ENCODE measurements at regions of chr5 and their contacts with region 1.

Region 1: GRCh38 chr5:35852084-35852734 is 4.5 kb upstream of the IL7R start:
- DNase-seq: peak; percentile 45
- H3K4me3 Mint-ChIP-seq: peak overlapping the region; percentile 90
- H3K27ac Mint-ChIP-seq: peak overlapping the region; percentile 96
- H3K4me1 Mint-ChIP-seq: peaks cover 72% of the 10 kb centered on the region
- H3K27me3 Mint-ChIP-seq: no peaks in the 10 kb centered on the region

Region 2: GRCh38 chr5:35617435-35618303 is 234.5 kb before region 1 on chr5 and contains the start of gene SPEF2:
- intact Hi-C with region 1: loop called (anchors 2 kb)
- DNase-seq: peak; percentile 71
- H3K4me3 Mint-ChIP-seq: peak within 1 kb of the TSS; percentile 92
- H3K27ac Mint-ChIP-seq: peak within 1 kb of the TSS; percentile 94
- H3K4me1 Mint-ChIP-seq: peaks cover 53% of the 10 kb centered on the region
- H3K27me3 Mint-ChIP-seq: no peaks in the 10 kb centered on the region
- total RNA-seq, gene SPEF2: 4.5 and 4.6 TPM in 2 replicates

Region 3: DNA sequence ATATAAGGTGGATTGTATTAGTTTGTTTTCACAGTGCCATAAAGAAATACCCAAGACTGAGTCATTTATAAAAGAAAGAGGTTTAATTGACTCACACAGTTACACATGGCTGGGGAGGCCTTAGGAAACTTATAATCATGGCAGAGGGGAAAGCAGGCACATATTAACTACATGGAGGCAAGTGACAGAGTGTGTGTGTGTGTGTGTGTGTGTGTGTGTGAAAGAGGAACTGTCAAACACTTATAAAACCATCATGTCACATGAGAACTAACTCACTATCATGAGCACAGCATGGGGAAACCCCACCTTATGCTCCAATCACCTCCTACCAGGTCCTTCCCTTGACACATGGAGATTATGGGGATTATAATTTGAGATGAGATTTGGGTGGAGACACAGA is 115.9 kb before region 1 on chr5:
- intact Hi-C with region 1: loop called (anchors 2 kb)
- DNase-seq: no peak
- H3K4me3 Mint-ChIP-seq: no peak overlapping the region
- H3K27ac Mint-ChIP-seq: peak overlapping the region; percentile 69
- H3K4me1 Mint-ChIP-seq: peaks cover 24% of the 10 kb centered on the region
- H3K27me3 Mint-ChIP-seq: no peaks in the 10 kb centered on the region

Region 4: GRCh38 chr5:35799753-35800152 is 52.5 kb before region 1 on chr5:
- intact Hi-C with region 1: loop called (anchors 1 kb)
- DNase-seq: no peak
- H3K4me3 Mint-ChIP-seq: no peak overlapping the region
- H3K27ac Mint-ChIP-seq: no peak overlapping the region
- H3K4me1 Mint-ChIP-seq: peaks cover 70% of the 10 kb centered on the region
- H3K27me3 Mint-ChIP-seq: no peaks in the 10 kb centered on the region

Region 5: DNA sequence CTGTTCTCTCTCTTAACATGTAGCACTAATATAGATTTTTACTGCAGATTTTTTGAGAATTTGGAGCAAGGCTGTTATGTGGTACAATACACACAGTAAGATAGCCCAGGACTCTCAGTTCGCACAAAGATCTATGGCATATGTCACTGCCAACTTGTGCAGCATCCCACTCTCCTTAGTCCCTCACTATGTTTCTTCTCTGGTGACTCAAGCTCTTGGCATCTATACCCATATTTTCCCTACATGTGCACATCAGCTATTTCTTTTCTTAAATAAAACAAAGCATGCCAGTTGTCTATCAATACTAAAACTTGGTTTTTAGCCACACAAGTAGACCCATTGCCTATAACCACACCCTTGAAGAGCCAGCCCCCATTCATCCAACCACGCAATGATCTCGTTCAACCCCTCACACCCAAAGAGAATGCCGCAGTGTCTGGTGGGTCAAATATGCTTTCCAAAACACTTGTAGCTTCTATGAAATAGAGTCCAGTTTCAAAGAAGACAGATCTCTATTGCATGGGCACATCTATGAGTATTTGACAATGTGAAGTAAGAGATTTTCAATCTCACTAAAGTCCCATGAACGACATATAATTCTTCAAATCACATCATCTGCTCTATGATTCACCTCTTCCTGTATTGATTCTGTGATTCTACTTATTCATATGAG is 13.7 kb before region 1 on chr5:
- intact Hi-C with region 1: loop called (anchors 1 kb)
- DNase-seq: no peak
- H3K4me3 Mint-ChIP-seq: no peak overlapping the region
- H3K27ac Mint-ChIP-seq: peak overlapping the region; percentile 65
- H3K4me1 Mint-ChIP-seq: peaks cover 60% of the 10 kb centered on the region
- H3K27me3 Mint-ChIP-seq: no peaks in the 10 kb centered on the region

Region 6: GRCh38 chr5:35926389-35927051 is 74.3 kb after region 1 on chr5:
- intact Hi-C with region 1: loop called (anchors 1 kb)
- DNase-seq: peak; percentile 57
- H3K4me3 Mint-ChIP-seq: no peak overlapping the region
- H3K27ac Mint-ChIP-seq: no peak overlapping the region
- H3K4me1 Mint-ChIP-seq: peaks cover 38% of the 10 kb centered on the region
- H3K27me3 Mint-ChIP-seq: peaks cover 3% of the 10 kb centered on the region

Region 7: DNA sequence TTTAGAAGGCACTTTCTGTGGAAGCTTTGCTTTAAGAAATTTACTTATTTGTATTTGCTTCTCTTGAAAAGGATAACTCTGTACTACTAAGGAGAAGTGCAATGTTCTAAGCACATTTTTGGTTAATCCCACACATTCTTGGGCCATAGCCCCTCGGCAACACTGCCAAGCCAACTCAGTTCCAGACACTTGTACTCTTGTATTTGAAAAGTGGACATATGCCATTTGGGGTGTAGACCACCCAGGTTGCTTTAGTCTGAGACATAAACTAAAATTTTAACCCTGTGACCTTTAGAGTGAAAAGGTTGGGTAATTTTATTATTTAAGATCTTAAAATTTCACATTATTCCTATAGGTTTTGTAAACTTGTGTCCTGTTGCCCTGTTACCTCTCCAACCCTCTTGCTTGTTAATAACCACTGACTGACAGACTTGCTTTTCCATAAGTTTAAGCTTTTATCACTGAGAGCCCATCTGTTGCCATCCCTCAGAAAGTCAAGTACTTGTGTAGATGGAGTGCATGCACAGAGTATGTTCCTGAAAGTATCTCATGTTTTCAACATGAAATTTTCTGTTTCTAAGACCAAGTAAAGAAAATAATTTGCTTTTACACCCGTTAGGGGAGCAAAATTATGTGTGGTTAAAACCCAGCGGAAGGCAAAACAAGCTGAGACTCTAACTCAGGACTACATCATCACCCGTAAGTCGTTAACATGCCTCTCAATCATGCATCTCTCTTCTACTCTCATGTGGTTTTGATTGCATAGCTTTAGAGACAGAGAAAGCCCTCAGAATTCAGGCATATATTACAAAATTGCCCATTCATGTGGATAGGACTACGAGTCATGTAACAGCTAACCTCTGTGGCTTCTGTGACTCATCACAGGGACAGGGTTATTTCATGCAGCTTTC is 1870.3 kb after region 1 on chr5:
- intact Hi-C with region 1: loop called (anchors 2 kb)
- DNase-seq: peak; percentile 53
- H3K4me3 Mint-ChIP-seq: peak overlapping the region; percentile 77
- H3K27ac Mint-ChIP-seq: peak overlapping the region; percentile 95
- H3K4me1 Mint-ChIP-seq: peaks cover 42% of the 10 kb centered on the region
- H3K27me3 Mint-ChIP-seq: no peaks in the 10 kb centered on the region

Measured in activated T-helper 1 cell treated with anti-CD3 and anti-CD28 coated beads, Interleukin-12 subunit alpha, Interleukin-12 subunit beta, Interleukin-2, Interleukin-4 antibody, amounts not matched to agents 30 ng/mL and 10 ng/mL and 1 ng/mL, durations not matched to agents 14 hours and 24 hours and 36 hours (primary cell).